ENCODE measurements at regions of chr5 and their contacts with region 1.

Region 1: GRCh38 chr5:15533129-15533893 is 33.3 kb downstream of the FBXL7 start:
- DNase-seq: no peak
- H3K4me3 ChIP-seq: no peak overlapping the region
- H3K27ac ChIP-seq: no peak overlapping the region
- H3K4me1 ChIP-seq: no peaks in the 10 kb centered on the region
- H3K27me3 ChIP-seq: no peaks in the 10 kb centered on the region
- CTCF ChIP-seq: no peak
- POLR2A ChIP-seq: no peak

Region 2: GRCh38 chr5:15807871-15808270 is 274.6 kb after region 1 on chr5:
- intact Hi-C with region 1: loop called (anchors 10 kb)
- DNase-seq: no peak
- H3K4me3 ChIP-seq: no peak overlapping the region
- H3K27ac ChIP-seq: no peak overlapping the region
- H3K4me1 ChIP-seq: no peaks in the 10 kb centered on the region
- H3K27me3 ChIP-seq: no peaks in the 10 kb centered on the region
- CTCF ChIP-seq: no peak
- POLR2A ChIP-seq: no peak